ENCODE measurements at regions of chr4 and their contacts with region 1.

Region 1: GRCh38 chr4:1050486-1051213 is 39.2 kb downstream of the FGFRL1 start:
- DNase-seq: no peak
- H3K4me3 ChIP-seq: no peak overlapping the region
- H3K27ac ChIP-seq: no peak overlapping the region
- H3K4me1 ChIP-seq: peaks cover 26% of the 10 kb centered on the region
- H3K27me3 ChIP-seq: peaks cover 10% of the 10 kb centered on the region
- CTCF ChIP-seq: peak in 1 of 2 donors; percentile 10

Region 2: DNA sequence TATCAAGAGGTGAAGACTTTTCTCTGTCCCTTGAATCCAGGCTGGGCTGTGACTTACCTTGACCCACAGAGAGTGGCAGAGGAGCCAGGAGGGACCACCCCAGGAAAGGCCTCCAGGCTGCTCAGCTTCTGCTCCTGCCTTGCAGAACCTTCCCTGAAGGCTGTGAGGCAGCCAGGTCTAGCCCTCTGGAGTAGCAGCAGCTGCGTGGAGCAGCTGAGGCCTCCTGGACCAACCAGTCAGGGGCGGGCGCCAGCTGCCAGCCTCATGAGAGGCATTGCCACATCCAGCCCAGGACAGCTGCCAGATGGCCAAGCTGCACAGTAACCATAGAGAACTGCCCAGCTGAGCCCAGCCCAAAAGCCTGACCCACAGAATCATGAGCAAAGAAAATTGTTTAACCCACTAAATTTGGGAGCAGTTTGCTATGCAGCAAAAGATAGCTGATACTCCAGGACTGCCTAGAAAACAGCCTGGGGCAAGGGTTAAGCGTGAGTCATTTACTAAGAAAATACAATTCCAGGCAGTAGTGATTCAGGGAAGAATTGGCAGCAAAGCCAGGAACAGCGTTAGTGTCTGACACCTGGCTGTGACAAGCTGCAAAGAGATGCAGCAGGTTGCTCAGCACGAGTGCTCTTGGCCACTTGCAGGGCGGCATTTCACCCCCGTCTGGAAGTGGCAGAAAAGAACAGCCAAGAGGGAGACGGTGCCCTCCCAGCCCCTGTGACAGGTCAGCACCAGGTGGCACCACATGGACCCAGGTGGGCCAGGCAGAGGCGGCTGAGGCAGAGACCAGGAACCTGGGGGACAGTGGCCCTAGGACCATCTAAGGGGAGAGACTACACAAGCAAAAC is 440.0 kb before region 1 on chr4:
- CTCF ChIA-PET with region 1: no interaction called
- dilution Hi-C with region 1: loop called (anchors 5 kb)
- in situ Hi-C with region 1: no loop called
- intact Hi-C with region 1: no loop called
- DNase-seq: peak; percentile 87
- H3K4me3 ChIP-seq: no peak overlapping the region
- H3K27ac ChIP-seq: no peak overlapping the region
- H3K4me1 ChIP-seq: peaks cover 6% of the 10 kb centered on the region
- H3K27me3 ChIP-seq: no peaks in the 10 kb centered on the region
- CTCF ChIP-seq: peak in 1 of 2 donors; percentile 30

Region 3: GRCh38 chr4:915595-915994 is 135.1 kb before region 1 on chr4:
- CTCF ChIA-PET with region 1: no interaction called
- dilution Hi-C with region 1: loop called (anchors 5 kb)
- in situ Hi-C with region 1: no loop called
- intact Hi-C with region 1: no loop called
- DNase-seq: no peak
- H3K4me3 ChIP-seq: no peak overlapping the region
- H3K27ac ChIP-seq: no peak overlapping the region
- H3K4me1 ChIP-seq: peaks cover 20% of the 10 kb centered on the region
- H3K27me3 ChIP-seq: no peaks in the 10 kb centered on the region
- CTCF ChIP-seq: no peak

Region 4: GRCh38 chr4:1113311-1114009 is 62.8 kb after region 1 on chr4 and contains the start of gene RNF212:
- CTCF ChIA-PET with region 1: no interaction called
- dilution Hi-C with region 1: loop called (anchors 5 kb)
- in situ Hi-C with region 1: no loop called
- intact Hi-C with region 1: no loop called
- DNase-seq: no peak
- H3K4me3 ChIP-seq: peak within 1 kb of the TSS in 2 of 3 experiments; percentile 40 to 42
- H3K27ac ChIP-seq: no peak within 1 kb of the TSS
- H3K4me1 ChIP-seq: peaks cover 4% of the 10 kb centered on the region
- H3K27me3 ChIP-seq: no peaks in the 10 kb centered on the region
- CTCF ChIP-seq: no peak
- total RNA-seq, gene RNF212: 0.33 to 2.2 TPM

Region 5: DNA sequence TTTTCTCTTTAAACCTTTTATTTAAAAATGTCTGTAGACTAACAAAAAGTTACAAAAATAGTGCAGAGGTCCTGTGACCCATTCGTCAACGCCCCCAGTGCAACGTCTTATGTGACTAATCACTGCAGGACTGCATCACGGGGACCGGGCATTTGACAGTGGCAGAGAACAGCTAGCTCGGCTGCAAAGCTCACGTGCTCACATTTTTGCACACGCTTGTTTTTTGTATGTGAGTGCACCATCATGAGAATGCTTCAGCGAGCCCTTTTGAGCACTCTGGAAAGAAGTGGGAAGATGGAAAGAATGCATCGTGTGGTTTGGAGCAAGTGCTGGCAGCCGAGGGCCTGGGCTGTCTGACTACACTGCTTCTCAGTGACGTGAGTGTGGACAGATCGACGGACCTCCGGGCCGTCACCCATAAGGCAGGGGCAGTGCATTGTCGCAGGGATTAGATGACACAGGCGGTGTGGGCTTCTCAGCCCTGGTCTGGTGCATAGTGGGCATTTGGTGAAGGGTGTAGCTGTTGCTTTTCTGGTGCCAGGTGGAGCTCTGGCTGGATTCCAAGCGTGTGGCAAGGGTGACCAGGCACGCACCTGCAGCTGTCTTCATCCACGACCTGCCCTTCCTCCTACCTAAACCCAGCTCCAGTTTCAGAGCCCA is 104.0 kb after region 1 on chr4:
- CTCF ChIA-PET with region 1: no interaction called
- dilution Hi-C with region 1: loop called (anchors 5 kb)
- in situ Hi-C with region 1: no loop called
- intact Hi-C with region 1: no loop called
- DNase-seq: no peak
- H3K4me3 ChIP-seq: no peak overlapping the region
- H3K27ac ChIP-seq: no peak overlapping the region
- H3K4me1 ChIP-seq: no peaks in the 10 kb centered on the region
- H3K27me3 ChIP-seq: peaks cover 4% of the 10 kb centered on the region
- CTCF ChIP-seq: no peak